Activated CD4-positive, alpha-beta T cell treated with anti-CD3 and anti-CD28 coated beads, Interleukin-2, amount 10 ng/mL, durations not matched to agents 7 days and 5 days (primary cell): ENCODE measurements at regions of chr5 and their contacts with region 1.

Region 1: DNA sequence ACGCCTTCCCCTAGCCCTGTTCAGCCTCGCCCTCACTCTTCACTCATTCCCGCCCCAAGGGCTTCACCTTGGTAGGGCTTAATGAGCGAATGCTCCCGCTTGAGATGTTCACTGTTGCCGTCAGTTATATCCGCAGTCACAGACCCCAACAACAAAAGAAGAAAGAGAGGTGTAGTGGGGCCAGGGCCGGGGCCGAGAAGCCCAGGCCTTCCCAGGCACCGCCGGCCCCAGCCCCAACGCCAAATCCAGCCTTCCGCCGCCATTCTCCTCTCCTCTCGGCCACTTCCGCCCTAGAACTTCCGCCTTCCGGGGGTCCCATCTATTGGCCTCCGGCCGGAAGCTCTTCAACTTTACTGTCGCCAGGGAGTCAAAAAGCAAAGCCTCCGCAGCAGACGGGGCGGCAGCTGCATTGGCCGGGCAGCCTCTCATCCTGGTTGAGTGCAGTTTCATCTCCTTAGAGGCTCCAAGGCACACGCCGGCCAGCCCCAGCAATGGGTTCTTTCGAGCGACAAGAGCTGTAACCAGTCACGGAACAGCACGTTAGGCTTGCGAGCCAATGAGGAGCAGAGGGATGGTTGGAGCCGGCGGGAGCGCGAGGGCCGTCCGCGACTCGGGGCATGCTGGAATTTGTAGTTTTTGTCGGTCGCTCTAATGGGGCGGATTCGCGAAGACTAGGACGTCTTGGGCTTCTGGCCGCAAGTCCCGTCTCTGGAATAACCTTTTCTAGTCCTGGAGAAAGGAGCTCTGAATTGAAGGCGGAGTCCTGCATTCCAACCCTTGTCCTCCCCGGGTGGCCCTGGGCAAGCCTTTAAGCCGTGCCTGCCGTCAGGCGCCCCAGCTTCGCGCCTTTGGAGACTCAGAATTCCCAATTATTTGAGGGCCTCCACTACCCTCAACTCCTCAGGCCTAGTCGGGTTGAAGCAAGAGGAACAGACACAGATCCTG is at the start of gene LMAN2:
- DNase-seq: peak; percentile 95
- H3K4me3 Mint-ChIP-seq: peak within 1 kb of the TSS; percentile 93
- H3K27ac Mint-ChIP-seq: peak within 1 kb of the TSS; percentile 100
- H3K4me1 Mint-ChIP-seq: peaks cover 75% of the 10 kb centered on the region
- H3K27me3 Mint-ChIP-seq: no peaks in the 10 kb centered on the region
- total RNA-seq, gene LMAN2: 123 to 132 TPM

Region 2: GRCh38 chr5:176948458-176948857 is 403.2 kb before region 1 on chr5:
- CTCF ChIA-PET with region 1: no interaction called
- POLR2A ChIA-PET with region 1: no interaction called
- DNase-seq: no peak
- H3K4me3 Mint-ChIP-seq: no peak overlapping the region
- H3K27ac Mint-ChIP-seq: no peak overlapping the region
- H3K4me1 Mint-ChIP-seq: peaks cover 2% of the 10 kb centered on the region
- H3K27me3 Mint-ChIP-seq: no peaks in the 10 kb centered on the region

Region 3: DNA sequence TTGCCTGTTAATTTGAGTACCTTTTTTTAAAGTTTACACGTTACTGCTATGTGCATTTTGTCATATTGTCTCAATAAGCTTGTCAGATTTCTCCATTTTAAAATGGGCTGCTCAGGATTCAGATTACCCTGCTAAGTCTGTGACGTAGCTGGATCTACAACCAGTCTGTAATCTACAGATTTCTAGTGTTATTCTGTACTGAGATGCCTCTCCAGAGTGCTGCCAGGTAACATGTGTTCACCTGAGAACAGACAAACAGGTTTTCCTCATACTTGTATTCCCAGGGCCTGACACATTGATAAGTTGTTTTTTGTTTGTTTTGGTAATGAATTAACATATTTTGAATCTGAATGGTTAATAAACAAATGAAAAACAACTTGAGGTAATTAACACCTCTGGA is 63.5 kb before region 1 on chr5:
- CTCF ChIA-PET with region 1: no interaction called
- POLR2A ChIA-PET with region 1: no interaction called
- DNase-seq: no peak
- H3K4me3 Mint-ChIP-seq: no peak overlapping the region
- H3K27ac Mint-ChIP-seq: no peak overlapping the region
- H3K4me1 Mint-ChIP-seq: peaks cover 13% of the 10 kb centered on the region
- H3K27me3 Mint-ChIP-seq: no peaks in the 10 kb centered on the region

Region 4: DNA sequence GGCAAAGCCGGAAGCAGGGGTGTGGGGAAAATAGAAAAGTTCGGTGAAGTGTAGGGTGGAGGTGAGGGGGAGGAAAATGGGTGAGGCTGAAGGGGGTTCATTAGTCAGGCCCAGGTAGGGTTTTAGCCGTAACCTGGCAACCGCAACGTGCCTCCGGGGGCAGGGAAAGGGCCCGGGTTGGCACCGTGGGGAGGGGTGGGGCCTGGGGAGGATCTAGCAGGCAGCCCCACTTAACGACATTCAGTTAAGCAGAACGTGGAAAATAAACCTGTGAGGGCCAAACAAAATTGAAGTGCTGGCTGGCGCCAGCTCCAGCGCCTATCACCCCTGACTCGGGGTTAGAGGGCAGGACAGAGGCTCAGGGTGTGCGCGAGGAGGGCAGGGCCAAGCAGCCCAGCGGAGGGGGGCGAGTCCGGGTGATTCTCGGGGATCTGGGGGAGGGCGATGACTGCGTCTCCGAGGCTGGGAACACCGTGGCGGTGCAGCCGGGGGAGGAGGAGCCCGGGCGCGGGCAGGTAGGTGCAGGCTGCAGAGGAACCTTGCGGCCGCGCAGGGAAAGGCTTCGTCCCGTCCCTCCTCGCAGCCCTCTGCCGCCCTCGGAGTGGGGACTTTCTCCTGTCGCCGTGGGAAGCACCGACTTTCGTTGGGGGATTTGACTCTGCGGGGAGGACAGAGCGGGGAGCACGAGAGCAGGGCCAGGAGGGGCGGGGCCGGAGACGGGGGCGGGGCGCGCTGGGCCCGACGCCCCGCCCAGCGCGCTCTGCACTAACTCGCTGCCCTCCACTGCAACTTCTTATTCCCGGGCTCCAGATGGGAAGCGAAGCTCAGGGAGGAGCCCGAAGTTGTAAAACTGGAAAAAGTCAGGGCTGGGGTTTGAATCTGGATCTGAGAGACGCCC is 11.2 kb after region 1 on chr5:
- CTCF ChIA-PET with region 1: interaction called, 145 read pairs
- POLR2A ChIA-PET with region 1: interaction called, 3 read pairs
- DNase-seq: peak; percentile 57
- H3K4me3 Mint-ChIP-seq: peak overlapping the region; percentile 71
- H3K27ac Mint-ChIP-seq: peak overlapping the region; percentile 84
- H3K4me1 Mint-ChIP-seq: peaks cover 71% of the 10 kb centered on the region
- H3K27me3 Mint-ChIP-seq: no peaks in the 10 kb centered on the region

Region 5: DNA sequence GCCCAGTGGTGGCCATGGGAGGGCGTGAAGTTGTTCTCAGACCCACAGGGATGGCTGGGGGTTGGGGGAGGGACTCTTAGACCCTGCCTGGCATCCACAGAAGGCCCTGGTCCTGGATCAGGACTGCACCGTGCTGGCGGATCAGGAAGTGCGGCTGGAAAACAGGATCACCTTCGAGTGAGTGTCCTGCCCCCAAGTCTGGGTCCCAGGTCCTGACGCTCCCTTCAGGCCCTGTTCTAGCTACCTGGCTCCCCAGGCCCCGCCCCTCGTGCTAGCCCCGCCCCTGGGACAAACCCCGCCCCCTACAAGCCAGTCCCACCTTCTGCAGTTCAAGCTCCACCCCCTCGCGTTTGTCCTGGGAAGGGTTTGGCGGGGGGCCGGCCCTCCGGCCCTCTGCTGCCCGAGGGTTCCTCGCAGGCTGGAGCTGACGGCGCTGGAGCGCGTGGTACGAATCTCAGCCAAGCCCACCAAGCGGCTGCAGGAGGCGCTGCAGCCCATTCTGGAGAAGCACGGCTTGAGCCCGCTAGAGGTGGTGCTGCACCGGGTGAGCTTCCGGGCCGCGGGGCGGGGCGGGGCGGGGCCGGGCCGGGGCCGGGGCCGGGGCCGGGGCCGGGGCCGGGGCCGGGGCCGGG is 18.9 kb after region 1 on chr5:
- CTCF ChIA-PET with region 1: interaction called, 145 read pairs
- POLR2A ChIA-PET with region 1: no interaction called
- DNase-seq: peak; percentile 56
- H3K4me3 Mint-ChIP-seq: peak overlapping the region; percentile 36
- H3K27ac Mint-ChIP-seq: peak overlapping the region; percentile 36
- H3K4me1 Mint-ChIP-seq: peaks cover 66% of the 10 kb centered on the region
- H3K27me3 Mint-ChIP-seq: no peaks in the 10 kb centered on the region

Region 6: GRCh38 chr5:177507596-177508220 is 156.1 kb after region 1 on chr5:
- CTCF ChIA-PET with region 1: no interaction called
- POLR2A ChIA-PET with region 1: no interaction called
- DNase-seq: no peak
- H3K4me3 Mint-ChIP-seq: no peak overlapping the region
- H3K27ac Mint-ChIP-seq: peak overlapping the region; percentile 5
- H3K4me1 Mint-ChIP-seq: peaks cover 6% of the 10 kb centered on the region
- H3K27me3 Mint-ChIP-seq: no peaks in the 10 kb centered on the region